ENCODE measurements at regions of chr18 and their contacts with region 1.

Region 1: DNA sequence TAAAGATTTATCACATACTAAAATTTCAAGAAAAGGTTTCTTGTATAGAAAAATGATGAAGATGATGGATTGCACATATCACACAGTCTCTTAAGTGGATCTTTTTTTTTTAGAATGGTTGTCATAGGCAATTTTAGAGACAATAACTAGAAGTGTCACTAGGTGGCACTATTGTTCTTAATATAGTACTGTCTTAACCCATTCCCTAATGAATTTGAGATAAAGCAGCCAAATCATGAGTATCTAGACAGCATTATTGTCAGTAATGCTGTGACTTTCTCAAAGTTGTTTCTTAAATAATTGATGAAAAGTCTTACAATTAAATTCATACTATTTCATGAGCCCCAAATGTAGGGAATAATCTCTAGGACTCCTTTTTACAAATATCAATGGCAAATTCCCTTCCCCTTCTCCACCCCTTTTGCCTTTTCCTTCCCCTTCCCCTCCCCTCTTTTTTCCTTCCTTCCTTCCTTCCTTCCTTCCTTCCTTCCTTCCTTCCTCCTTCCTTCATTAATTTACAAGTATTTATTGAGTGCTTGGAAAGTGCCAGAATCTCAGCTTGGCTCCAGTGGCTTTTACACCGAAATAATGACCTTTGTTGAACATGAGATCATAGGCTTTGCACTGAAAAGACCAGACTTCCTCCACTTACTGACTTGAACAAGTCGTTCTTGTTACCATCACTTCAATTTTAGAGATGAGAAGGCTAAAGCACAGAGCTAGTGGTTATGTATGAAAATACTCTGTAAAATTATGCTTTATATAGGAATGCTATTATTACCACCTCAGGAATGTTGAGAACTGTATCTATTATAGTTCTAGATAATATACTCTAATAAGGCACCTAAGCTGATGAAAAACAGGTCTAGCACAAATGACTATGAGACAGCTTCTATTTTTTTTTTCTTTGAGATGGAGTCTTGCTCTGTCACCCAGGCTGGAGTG is 19.8 kb downstream of the MYL12B start:
- DNase-seq: no peak
- H3K4me3 ChIP-seq: no peak overlapping the region
- H3K27ac ChIP-seq: no peak overlapping the region
- H3K4me1 ChIP-seq: no peaks in the 10 kb centered on the region
- H3K27me3 ChIP-seq: no peaks in the 10 kb centered on the region
- CTCF ChIP-seq: peak; percentile 65 to 80 (median 72)
- POLR2A ChIP-seq: no peak

Region 2: DNA sequence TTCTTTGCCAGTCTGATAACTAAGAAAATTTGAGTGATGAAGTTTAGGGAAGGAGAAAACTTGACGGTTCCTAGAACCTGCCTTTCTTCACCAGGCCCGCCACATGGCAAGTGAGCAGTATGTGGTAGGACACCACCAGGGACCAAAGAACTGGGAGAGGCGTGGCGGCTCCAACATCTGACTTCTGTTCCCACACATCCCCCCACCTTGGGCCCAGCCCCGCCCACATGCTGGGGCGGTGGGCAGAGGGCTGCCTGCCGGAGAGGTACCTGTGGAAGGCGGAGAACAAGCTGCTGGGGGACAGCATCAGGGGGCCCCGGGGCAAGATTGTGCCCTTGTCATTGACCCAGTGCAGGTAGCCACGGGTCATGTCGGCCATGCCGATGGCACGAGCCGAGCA is 359.9 kb before region 1 on chr18:
- intact Hi-C with region 1: no loop called
- DNase-seq: peak in 1 of 2 donors; percentile 14
- H3K4me3 ChIP-seq: no peak overlapping the region
- H3K27ac ChIP-seq: no peak overlapping the region
- H3K4me1 ChIP-seq: peaks cover 0 to 6% of the 10 kb centered on the region in 2 donors
- H3K27me3 ChIP-seq: no peaks in the 10 kb centered on the region
- CTCF ChIP-seq: no peak
- POLR2A ChIP-seq: no peak

Region 3: GRCh38 chr18:3665780-3666525 is 384.2 kb after region 1 on chr18:
- intact Hi-C with region 1: loop called (anchors 2 kb)
- DNase-seq: peak; percentile 83 to 88
- H3K4me3 ChIP-seq: peak overlapping the region in 1 of 2 donors; percentile 7
- H3K27ac ChIP-seq: peak overlapping the region; percentile 62 to 68
- H3K4me1 ChIP-seq: no peaks in the 10 kb centered on the region
- H3K27me3 ChIP-seq: no peaks in the 10 kb centered on the region
- CTCF ChIP-seq: peak; percentile 84 to 97 (median 93)
- POLR2A ChIP-seq: no peak

Measured in uterus (tissue), 4 donors.